ENCODE measurements at regions of chr3 and their contacts with region 1.

Region 1: GRCh38 chr3:185282696-185283394 is 29.0 kb upstream of the EHHADH start:
- DNase-seq: peak; percentile 100
- H3K4me3 Mint-ChIP-seq: peak overlapping the region; percentile 87
- H3K27ac Mint-ChIP-seq: peak overlapping the region; percentile 88
- H3K4me1 Mint-ChIP-seq: peaks cover 39% of the 10 kb centered on the region
- H3K27me3 Mint-ChIP-seq: no peaks in the 10 kb centered on the region
- CTCF ChIP-seq: no peak

Region 2: GRCh38 chr3:185308126-185308754 is 25.4 kb after region 1 on chr3:
- CTCF ChIA-PET with region 1: no interaction called
- intact Hi-C with region 1: loop called (anchors 2 kb)
- DNase-seq: peak; percentile 90
- H3K4me3 Mint-ChIP-seq: no peak overlapping the region
- H3K27ac Mint-ChIP-seq: peak overlapping the region; percentile 61
- H3K4me1 Mint-ChIP-seq: peaks cover 33% of the 10 kb centered on the region
- H3K27me3 Mint-ChIP-seq: no peaks in the 10 kb centered on the region
- CTCF ChIP-seq: peak; percentile 87